ENCODE measurements at regions of chr12 and their contacts with region 1.

Region 1: DNA sequence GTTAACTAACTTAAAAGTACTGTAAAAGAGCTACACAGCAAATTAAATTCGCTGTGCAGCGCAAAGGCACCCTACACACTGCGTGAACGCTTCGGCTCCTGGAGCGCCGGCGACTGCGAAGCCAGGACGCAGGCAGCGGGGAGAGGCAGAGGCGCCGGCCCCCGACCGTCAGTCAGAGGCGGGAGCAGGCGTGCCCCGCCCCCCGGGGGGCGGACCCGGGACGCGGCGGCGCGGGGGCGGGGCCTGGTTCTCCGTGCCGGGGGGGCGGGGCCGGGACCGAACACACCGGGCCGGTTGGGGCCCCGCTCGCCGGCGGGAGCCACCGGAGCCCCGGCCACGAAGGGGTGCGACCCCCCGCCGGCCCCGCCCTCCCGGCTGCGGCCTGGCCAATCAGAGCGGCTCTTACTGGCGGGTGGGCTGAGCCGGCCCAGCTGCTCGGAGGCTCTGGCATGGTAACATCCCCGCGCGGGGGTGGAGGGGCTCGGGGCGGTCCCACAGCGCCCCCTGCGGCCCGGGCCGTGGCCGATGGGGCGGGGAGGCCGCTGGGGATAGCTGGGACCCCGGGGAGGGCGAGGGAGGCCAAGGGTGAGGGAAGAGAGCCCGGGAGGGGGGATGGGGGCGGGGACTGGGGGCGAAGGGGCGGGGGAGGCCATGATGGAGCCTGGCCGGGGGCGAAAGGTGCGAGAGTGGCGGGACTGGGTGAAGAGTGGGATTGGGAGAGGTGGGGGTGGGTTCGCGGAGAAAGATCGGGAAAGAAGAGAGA is at the start of gene PRPF40B:
- DNase-seq: peak; percentile 92
- ATAC-seq: peak; percentile 76
- H3K4me3 Mint-ChIP-seq: peak within 1 kb of the TSS; percentile 72
- H3K27ac Mint-ChIP-seq: peak within 1 kb of the TSS; percentile 86
- H3K4me1 Mint-ChIP-seq: peaks cover 31% of the 10 kb centered on the region
- H3K27me3 Mint-ChIP-seq: peaks cover 11% of the 10 kb centered on the region
- total RNA-seq, gene PRPF40B: 6.9 to 8.1 TPM

Region 2: DNA sequence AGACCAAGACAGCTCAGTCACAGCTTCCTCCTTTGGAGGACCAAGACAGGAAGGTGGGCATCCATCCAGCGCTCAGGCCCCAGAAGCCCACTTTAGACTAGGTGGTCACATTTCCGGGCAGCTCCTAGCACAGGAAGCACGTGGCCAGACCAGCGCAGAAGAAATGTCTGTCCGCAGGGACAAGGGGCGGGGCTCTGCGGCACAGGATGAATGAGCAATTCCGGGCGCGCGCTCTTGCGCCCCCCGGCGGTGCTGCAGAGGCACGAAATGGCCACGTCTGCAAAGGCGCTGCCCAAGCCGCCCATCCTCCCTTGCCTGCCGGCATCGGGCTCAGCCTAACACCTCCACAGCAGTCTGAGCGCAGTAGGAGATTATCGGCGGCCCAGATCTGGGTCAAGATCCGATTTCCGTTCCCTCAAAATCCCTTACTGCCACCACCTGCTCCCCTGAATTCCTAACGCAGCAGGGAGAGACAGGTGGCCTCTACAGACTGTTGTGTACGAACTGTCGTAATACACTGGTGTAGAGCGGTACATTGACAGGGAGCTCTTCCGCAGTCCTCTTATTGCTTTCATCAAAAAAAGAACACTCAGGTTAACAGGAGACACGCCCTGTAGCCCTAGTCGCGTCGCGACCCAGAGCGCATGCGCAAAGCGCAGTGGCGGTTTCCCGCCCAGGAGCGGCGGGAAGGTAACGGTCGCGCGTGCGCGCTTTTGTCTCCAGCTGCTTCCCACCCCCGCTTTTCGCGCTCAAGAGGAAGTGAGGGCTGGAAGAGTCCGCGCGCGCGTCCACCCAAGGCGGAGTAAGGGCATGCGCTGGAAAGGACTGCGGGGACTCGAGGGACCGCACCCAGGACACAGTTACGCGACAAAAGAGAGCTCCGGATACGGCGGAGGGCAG is 492.9 kb before region 1 on chr12:
- CTCF ChIA-PET with region 1: no interaction called
- POLR2A ChIA-PET with region 1: no interaction called
- intact Hi-C with region 1: loop called in 1 of 2 experiments (anchors 1 kb)
- DNase-seq: peak; percentile 96
- ATAC-seq: peak; percentile 58
- H3K4me3 Mint-ChIP-seq: peak overlapping the region; percentile 99
- H3K27ac Mint-ChIP-seq: peak overlapping the region; percentile 97
- H3K4me1 Mint-ChIP-seq: peaks cover 44% of the 10 kb centered on the region
- H3K27me3 Mint-ChIP-seq: no peaks in the 10 kb centered on the region

Region 3: DNA sequence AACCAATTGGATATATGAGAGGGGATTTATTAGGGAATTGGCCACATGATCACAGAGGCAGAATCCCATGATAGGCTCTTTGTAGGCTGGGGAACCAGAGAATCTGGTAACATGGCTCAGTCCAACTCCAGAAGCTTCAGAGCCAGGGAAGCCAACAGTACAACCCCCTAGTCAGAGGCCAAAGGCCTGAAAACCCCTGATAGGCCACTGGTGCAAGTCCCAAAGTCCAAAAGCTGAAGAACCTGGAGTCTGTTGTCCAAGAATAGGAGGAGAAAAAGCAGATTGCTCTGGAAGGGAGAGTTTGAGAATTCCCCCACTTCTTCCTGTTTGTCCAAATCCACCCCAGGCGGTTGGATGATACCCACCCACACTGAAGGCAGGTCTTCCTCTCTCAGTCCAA is 308.5 kb before region 1 on chr12:
- CTCF ChIA-PET with region 1: no interaction called
- POLR2A ChIA-PET with region 1: no interaction called
- intact Hi-C with region 1: no loop called
- DNase-seq: no peak
- ATAC-seq: no peak
- H3K4me3 Mint-ChIP-seq: no peak overlapping the region
- H3K27ac Mint-ChIP-seq: no peak overlapping the region
- H3K4me1 Mint-ChIP-seq: no peaks in the 10 kb centered on the region
- H3K27me3 Mint-ChIP-seq: peaks cover 6% of the 10 kb centered on the region

Region 4: DNA sequence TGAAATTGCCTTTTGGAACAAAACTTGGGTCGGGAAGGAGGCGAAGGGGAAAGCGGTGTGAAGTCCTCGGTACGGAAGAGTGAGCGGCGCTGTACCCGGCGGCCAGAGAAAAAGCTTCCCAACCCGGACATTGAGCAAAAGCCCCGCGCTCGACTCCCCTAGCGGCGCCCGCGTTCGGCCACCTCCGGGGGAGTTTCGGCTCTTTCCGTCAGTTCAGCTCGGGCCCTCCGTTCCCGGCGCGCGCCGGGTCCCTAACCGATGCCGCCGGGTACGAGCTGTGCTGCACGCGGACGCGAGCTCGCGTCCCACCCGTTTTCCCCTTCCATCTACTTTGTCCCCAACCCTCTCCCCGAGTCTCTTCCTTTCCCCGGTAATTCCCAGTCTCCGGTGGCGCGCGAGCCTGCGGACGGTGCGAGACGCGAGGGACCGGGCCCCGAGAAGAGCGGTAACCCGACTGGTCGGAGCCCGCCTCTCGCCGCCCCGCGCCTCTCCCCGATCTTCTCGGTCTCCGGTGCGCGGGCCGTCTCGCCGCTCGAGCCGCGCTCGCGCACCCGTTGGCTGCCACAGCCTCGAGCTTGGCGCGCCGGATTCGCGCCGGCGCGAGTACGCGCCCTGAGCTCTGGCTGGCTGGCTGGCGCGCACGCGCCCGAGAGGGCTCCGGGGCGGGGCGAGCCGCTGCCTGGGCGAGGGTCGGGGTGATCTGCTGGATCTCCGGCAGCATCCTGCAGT is 256.5 kb before region 1 on chr12:
- CTCF ChIA-PET with region 1: no interaction called
- POLR2A ChIA-PET with region 1: no interaction called
- intact Hi-C with region 1: loop called in 1 of 2 experiments (anchors 1 kb)
- DNase-seq: peak; percentile 94
- ATAC-seq: peak; percentile 86
- H3K4me3 Mint-ChIP-seq: peak overlapping the region; percentile 97
- H3K27ac Mint-ChIP-seq: peak overlapping the region; percentile 99
- H3K4me1 Mint-ChIP-seq: peaks cover 25% of the 10 kb centered on the region
- H3K27me3 Mint-ChIP-seq: no peaks in the 10 kb centered on the region

Region 5: GRCh38 chr12:49553512-49554088 is 69.7 kb before region 1 on chr12:
- CTCF ChIA-PET with region 1: no interaction called
- POLR2A ChIA-PET with region 1: no interaction called
- intact Hi-C with region 1: no loop called
- DNase-seq: no peak
- ATAC-seq: peak; percentile 74
- H3K4me3 Mint-ChIP-seq: no peak overlapping the region
- H3K27ac Mint-ChIP-seq: no peak overlapping the region
- H3K4me1 Mint-ChIP-seq: peaks cover 3% of the 10 kb centered on the region
- H3K27me3 Mint-ChIP-seq: peaks cover 3% of the 10 kb centered on the region

Region 6: GRCh38 chr12:49580572-49581535 is 42.5 kb before region 1 on chr12:
- CTCF ChIA-PET with region 1: interaction called, 3 read pairs
- POLR2A ChIA-PET with region 1: no interaction called
- intact Hi-C with region 1: loop called in 1 of 2 experiments (anchors 1 kb)
- DNase-seq: peak; percentile 77
- ATAC-seq: peak; percentile 84
- H3K4me3 Mint-ChIP-seq: no peak overlapping the region
- H3K27ac Mint-ChIP-seq: peak overlapping the region; percentile 68
- H3K4me1 Mint-ChIP-seq: peaks cover 21% of the 10 kb centered on the region
- H3K27me3 Mint-ChIP-seq: no peaks in the 10 kb centered on the region

Region 7: DNA sequence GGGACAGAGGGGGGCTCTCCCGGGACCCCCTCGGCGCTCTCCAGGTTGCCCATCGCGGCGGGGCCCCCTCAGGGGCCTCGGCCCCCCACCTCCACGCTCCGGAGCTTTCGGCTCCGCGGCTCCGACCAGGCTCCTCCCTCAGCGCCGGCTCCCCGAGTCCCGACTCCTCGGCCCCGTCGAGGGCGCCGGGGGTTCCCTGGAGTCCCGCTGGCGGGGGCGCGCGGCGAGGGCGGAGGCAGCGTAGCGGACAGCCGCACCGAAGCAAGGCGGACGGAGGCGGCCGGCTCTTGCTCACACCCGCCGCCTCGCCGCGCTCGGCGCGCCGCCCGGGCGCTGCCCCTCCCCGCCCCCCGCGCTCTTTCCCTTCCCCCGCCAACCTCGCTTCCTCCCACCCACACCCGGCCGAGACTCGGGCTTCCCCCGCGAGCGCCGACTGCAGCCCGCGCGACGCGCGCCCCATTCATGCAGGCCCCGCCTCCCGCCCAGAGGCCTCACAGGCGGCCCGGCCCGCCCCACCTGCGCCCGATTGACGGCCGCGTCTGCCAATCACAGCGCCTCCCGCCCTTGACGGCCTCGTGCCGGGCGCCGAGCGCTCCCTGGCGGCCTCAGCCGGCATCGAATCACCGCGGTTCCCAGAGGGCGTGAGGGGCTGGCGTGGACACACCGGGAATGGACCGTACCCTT is 83.9 kb after region 1 on chr12 and contains the start of gene FMNL3:
- CTCF ChIA-PET with region 1: interaction called, 9 read pairs
- POLR2A ChIA-PET with region 1: no interaction called
- intact Hi-C with region 1: loop called in 1 of 2 experiments (anchors 1 kb)
- DNase-seq: peak; percentile 99
- ATAC-seq: peak; percentile 92
- H3K4me3 Mint-ChIP-seq: peak within 1 kb of the TSS; percentile 92
- H3K27ac Mint-ChIP-seq: peak within 1 kb of the TSS; percentile 83
- H3K4me1 Mint-ChIP-seq: peaks cover 43% of the 10 kb centered on the region
- H3K27me3 Mint-ChIP-seq: peaks cover 5% of the 10 kb centered on the region
- total RNA-seq, gene FMNL3: 23.2 to 24.3 TPM

Region 8: DNA sequence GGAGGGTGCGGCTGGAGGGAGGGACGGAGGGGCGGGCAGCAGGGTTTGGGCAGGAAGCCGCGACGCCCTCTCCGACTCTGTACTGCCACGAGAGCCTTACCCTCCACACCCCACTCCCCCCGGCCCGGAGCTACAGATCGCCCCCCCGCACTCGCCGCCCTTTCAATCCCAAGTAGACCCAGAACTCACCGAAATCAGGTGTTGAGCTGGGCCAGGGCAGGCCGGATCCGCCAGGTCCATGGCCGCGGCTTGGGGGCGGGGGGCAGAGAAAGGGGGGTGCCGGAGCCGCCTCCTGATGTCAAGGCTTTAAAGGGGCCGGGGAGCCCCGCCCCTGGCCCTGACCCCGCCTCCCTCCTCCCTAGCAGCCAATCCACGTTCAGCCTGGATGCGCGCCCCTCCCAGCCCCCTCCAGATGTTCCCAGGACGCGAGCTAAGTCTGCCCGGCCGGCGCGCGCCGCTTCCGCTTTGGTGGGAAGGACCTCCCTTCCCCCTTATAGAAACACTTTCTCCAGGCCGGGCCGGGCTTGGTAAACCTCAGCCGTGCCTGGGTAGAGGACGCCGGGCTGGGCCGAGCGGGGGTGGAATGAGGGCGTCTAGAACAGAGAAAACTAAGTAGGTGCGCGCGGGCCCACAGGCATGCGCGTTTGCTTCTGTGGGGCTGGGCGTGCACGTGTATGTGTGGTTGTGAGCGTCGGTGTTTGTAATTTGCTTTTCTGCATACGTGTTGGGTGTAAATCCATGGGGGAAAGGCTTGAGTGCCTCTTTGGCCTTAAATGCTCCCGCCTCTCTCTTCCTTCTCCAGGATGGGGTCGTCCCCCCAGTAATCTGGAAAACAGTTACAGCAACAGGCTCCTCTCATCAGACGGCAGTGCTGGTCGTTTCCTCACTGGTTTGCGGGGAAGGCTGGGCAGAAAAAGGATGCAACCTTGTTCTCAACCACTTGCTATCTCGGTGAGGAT is 205.1 kb after region 1 on chr12 and contains the start of gene NCKAP5L:
- CTCF ChIA-PET with region 1: no interaction called
- POLR2A ChIA-PET with region 1: no interaction called
- intact Hi-C with region 1: loop called in 1 of 2 experiments (anchors 1 kb)
- DNase-seq: peak; percentile 97
- ATAC-seq: peak; percentile 99
- H3K4me3 Mint-ChIP-seq: peak within 1 kb of the TSS; percentile 86
- H3K27ac Mint-ChIP-seq: peak within 1 kb of the TSS; percentile 90
- H3K4me1 Mint-ChIP-seq: peaks cover 27% of the 10 kb centered on the region
- H3K27me3 Mint-ChIP-seq: no peaks in the 10 kb centered on the region
- total RNA-seq, gene NCKAP5L: 4.3 to 4.5 TPM

Region 9: DNA sequence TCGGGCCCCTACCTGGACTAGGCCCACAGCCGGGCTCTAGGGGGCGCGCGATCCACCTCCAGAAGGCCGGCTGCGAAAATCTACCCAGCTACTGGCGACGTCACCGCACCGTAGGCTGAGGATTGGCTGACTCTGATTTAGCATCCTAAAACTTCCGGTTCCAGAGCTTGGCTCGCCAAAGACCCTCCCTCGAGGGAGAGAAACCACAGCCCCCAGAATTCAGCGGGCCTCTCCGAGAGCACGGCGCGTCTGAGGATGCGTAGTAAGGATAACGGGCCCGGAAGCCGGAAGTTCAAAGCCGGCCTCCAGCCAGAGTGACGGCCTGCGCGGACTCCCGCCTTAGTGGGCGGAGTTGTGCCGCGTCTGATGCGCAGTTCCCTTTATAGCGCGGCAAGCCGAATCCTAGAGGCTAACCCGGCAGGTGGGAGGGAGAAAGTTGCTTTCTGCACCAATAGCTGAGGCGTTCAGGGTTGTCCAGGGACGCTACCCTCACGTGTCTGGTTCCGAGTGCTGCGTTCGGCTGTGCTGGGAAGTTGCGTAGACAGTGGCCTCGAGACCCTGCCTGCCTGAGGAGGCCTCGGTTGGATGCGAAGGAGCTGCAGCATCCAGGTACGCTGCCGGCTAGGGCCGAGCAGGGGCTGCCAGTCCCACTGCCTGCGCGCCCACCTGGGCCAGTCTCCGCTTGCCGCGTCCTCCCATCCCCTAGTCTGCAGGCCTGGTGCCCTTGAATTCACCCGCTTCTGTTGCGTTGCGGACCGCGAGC is 488.6 kb after region 1 on chr12 and contains the start of gene COX14:
- CTCF ChIA-PET with region 1: no interaction called
- POLR2A ChIA-PET with region 1: interaction called, 6 read pairs
- intact Hi-C with region 1: loop called in 1 of 2 experiments (anchors 1 kb)
- DNase-seq: peak; percentile 99
- ATAC-seq: peak; percentile 91
- H3K4me3 Mint-ChIP-seq: peak within 1 kb of the TSS; percentile 100
- H3K27ac Mint-ChIP-seq: peak within 1 kb of the TSS; percentile 99
- H3K4me1 Mint-ChIP-seq: peaks cover 38% of the 10 kb centered on the region
- H3K27me3 Mint-ChIP-seq: no peaks in the 10 kb centered on the region
- total RNA-seq, gene COX14: 26.8 to 44.2 TPM